ENCODE measurements at regions of chr3 and their contacts with region 1.

Region 1: DNA sequence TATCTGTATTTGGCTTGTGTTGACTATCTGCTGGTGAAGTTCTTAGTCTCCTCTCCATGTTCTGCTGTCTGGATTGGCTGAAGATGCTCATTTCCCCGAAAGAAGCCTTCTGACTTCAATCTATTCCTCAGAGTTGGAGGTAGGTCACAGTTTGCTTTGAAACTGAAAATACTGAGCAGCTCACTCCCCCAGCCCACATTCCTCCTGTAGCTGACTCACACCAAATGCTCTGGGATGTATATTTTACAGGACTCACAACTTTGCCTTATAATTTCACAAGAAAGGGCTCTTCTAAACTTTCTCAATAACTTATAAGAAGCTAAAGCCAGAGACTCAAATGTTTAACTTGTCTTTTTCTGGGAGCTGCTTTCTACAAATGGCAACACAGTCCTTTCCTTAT is 36.3 kb upstream of the SNX4 start:
- DNase-seq: no peak
- H3K4me3 ChIP-seq: no peak overlapping the region
- H3K27ac ChIP-seq: no peak overlapping the region
- H3K4me1 ChIP-seq: no peaks in the 10 kb centered on the region
- H3K27me3 ChIP-seq: no peaks in the 10 kb centered on the region
- CTCF ChIP-seq: no peak

Region 2: DNA sequence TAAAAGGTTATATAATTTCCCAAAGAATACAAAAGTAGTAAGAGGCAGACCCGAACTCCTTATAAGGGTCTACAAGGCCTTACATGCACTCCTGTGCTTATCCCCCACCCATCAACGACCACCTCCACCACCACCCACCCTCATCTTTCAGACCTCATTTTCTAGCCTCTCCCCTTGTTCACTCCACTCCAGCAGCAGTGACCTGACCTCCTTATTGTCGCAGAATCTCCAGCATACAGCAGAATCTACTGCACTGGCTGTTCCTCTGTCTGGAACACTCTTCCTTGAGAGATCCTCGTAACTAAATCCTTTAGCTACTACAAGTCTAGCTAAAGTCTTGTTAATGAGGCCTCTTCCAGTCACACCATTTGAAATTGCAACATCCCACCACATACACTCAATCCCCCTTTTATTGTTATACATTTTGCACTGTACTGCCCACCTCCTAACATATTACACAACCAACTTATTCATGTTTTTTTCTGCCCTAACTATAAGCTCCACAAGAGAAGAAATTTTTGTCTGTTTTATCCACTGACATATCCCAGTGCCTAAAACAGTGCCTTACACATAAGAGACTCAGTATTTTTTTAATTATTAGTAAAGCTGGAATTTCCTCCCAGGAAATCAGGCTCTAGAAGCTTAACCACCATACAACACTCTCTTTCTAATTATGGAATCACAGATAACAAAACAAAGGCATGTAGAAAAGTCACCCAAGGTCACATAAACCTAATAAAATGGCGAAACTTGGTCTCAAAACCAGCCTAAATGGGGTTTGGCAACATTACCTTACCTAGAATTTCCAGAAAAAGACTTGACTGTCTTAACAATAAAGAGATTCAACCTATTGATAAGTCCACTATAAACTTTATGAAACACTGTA is 221.4 kb before region 1 on chr3:
- CTCF ChIA-PET with region 1: no interaction called
- POLR2A ChIA-PET with region 1: no interaction called
- intact Hi-C with region 1: no loop called
- DNase-seq: no peak
- H3K4me3 ChIP-seq: no peak overlapping the region
- H3K27ac ChIP-seq: no peak overlapping the region
- H3K4me1 ChIP-seq: peaks cover 8% of the 10 kb centered on the region; the same call in 1 of the 2 replicates
- H3K27me3 ChIP-seq: no peaks in the 10 kb centered on the region
- CTCF ChIP-seq: no peak

Region 3: GRCh38 chr3:125585595-125586223 is 29.4 kb after region 1 on chr3:
- CTCF ChIA-PET with region 1: interaction called, 3 read pairs
- POLR2A ChIA-PET with region 1: interaction called, 25 read pairs
- intact Hi-C with region 1: no loop called
- DNase-seq: peak; percentile 55 to 56
- H3K4me3 ChIP-seq: no peak overlapping the region
- H3K27ac ChIP-seq: no peak overlapping the region
- H3K4me1 ChIP-seq: no peaks in the 10 kb centered on the region
- H3K27me3 ChIP-seq: no peaks in the 10 kb centered on the region
- CTCF ChIP-seq: peak; percentile 84

Region 4: GRCh38 chr3:125608419-125608818 is 52.1 kb after region 1 on chr3:
- CTCF ChIA-PET with region 1: no interaction called
- POLR2A ChIA-PET with region 1: no interaction called
- intact Hi-C with region 1: no loop called
- DNase-seq: no peak
- H3K4me3 ChIP-seq: no peak overlapping the region
- H3K27ac ChIP-seq: no peak overlapping the region
- H3K4me1 ChIP-seq: no peaks in the 10 kb centered on the region
- H3K27me3 ChIP-seq: no peaks in the 10 kb centered on the region
- CTCF ChIP-seq: no peak

Region 5: DNA sequence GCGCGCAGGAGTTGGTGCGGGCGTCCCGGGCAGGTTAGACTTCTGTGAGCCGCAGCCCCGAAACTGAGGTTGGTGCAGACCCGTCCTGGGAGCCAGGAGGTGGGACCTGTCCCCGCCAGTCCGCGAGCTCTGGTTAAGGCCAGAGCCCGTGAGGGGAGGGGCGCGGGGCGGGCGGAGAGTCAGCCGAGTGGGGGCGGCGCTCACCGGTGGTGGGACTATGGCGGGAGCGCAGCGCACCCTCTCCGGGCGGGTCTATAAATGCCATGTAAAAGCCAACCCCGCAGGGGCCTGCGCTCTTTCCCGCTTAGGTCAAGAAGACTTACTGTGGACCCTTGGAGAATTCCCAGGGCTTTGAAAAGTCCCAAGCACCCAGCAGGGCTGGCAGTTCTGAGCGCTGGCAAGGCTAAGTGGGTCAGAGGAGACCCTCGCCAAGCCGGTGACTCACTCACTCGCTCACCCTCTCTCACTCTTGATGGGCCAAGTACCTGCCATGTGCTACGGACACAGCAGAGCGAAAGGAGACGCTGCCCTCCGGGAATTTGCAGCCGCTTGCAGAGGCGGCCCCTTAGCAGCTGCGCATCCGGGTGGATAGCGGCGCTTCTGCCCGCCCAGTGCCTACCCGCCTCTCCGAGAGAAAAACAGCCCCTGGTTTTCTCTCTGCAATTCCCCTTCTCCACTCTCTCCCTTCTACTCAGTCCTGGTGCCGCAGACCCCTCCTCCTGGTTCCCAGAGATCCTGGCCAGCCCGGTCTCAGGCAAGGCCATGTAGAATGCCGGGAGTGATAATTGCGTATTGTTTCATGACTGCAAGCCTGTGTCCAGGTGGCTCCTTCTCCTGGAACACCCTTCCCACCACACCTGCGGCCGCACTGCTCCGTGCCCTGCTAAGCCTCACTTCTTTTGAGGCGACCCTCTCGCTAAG is 624.4 kb after region 1 on chr3 and contains the start of gene ALDH1L1:
- CTCF ChIA-PET with region 1: no interaction called
- POLR2A ChIA-PET with region 1: no interaction called
- intact Hi-C with region 1: no loop called
- DNase-seq: peak; percentile 72 to 90
- H3K4me3 ChIP-seq: peak within 1 kb of the TSS; percentile 65
- H3K27ac ChIP-seq: peak within 1 kb of the TSS; percentile 69
- H3K4me1 ChIP-seq: peaks cover 14% of the 10 kb centered on the region; the same call in 1 of the 2 replicates
- H3K27me3 ChIP-seq: no peaks in the 10 kb centered on the region
- CTCF ChIP-seq: no peak
- total RNA-seq, gene ALDH1L1: 46.9 and 50.0 TPM in 2 replicates

Measured in PC-9 (cell line).